ENCODE measurements at regions of chr11 and their contacts with region 1.

Region 1: GRCh38 chr11:6377902-6378639 is 12.2 kb upstream of the SMPD1 start:
- DNase-seq: no peak
- ATAC-seq: peak; percentile 51
- H3K4me3 ChIP-seq: no peak overlapping the region
- H3K27ac ChIP-seq: no peak overlapping the region
- H3K4me1 ChIP-seq: peaks cover 6% of the 10 kb centered on the region; the same call in 1 of the 2 replicates
- H3K27me3 ChIP-seq: no peaks in the 10 kb centered on the region
- CTCF ChIP-seq: no peak
- EP300 ChIP-seq: no peak
- POLR2A ChIP-seq: no peak
- RAD21 ChIP-seq: no peak

Region 2: GRCh38 chr11:6389921-6390724 is 12.1 kb after region 1 on chr11 and contains the start of gene SMPD1:
- CTCF ChIA-PET with region 1: interaction called, 44 read pairs
- POLR2A ChIA-PET with region 1: interaction called, 5 read pairs
- RAD21 ChIA-PET with region 1: interaction called, 12 read pairs
- SMC1A ChIA-PET with region 1: interaction called, 25 read pairs
- in situ Hi-C with region 1: no loop called
- intact Hi-C with region 1: no loop called
- DNase-seq: peak; percentile 66
- ATAC-seq: peak; percentile 98
- H3K4me3 ChIP-seq: peak within 1 kb of the TSS; percentile 90
- H3K27ac ChIP-seq: peak within 1 kb of the TSS; percentile 64
- H3K4me1 ChIP-seq: peaks cover 6% of the 10 kb centered on the region
- H3K27me3 ChIP-seq: no peaks in the 10 kb centered on the region
- CTCF ChIP-seq: no peak
- EP300 ChIP-seq: peak; percentile 21 to 41; a peak in 1 of 4 replicates
- POLR2A ChIP-seq: peak; percentile 88
- RAD21 ChIP-seq: no peak
- polyA plus RNA-seq, gene SMPD1: 1.4 to 3.8 TPM

Region 3: DNA sequence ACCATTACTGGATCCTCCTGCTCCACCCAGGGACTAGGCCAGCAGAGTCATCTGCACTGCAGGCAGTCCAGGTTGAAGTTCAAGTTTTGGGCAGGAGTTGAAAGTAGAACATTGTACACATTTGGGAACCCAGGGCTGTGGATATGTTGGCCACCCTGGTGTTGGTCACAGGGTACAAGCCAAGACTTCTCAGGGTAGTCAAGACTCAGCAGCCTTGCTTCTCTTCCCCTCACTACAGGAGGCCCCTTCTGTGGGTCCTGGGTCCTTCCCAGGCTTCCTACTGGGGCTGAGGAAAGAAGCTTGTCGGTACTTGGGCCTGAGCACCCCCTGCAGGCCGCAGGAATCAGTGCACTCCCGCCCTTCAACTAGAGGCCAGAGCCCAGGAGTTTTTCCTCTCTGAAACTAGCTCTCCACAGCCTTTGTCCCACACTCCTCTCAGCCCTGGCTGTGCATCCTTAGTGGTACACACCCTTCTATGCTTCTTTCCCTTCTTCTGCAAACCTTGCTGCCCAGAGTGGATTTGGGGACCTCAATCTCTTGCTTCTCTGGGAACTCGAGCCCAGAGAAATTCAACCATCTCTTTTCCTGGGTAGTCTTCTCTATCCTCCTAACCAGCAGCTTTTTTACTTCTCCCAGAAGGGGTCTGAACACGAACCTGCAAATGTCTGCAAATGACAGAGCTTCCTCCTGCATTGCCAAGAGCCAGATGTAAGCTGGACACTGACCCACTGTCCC is 65.4 kb after region 1 on chr11:
- CTCF ChIA-PET with region 1: interaction called, 560 read pairs
- POLR2A ChIA-PET with region 1: interaction called, 7 read pairs
- RAD21 ChIA-PET with region 1: interaction called, 305 read pairs
- SMC1A ChIA-PET with region 1: interaction called, 293 read pairs
- in situ Hi-C with region 1: loop called (anchors 5 kb)
- intact Hi-C with region 1: loop called (anchors 1 kb)
- DNase-seq: no peak
- ATAC-seq: peak; percentile 91
- H3K4me3 ChIP-seq: no peak overlapping the region
- H3K27ac ChIP-seq: no peak overlapping the region
- H3K4me1 ChIP-seq: no peaks in the 10 kb centered on the region
- H3K27me3 ChIP-seq: no peaks in the 10 kb centered on the region
- CTCF ChIP-seq: peak; percentile 85 to 89 (median 87)
- EP300 ChIP-seq: no peak
- POLR2A ChIP-seq: no peak
- RAD21 ChIP-seq: peak; percentile 91

Region 4: GRCh38 chr11:6497069-6497839 is 119.2 kb after region 1 on chr11 and contains the start of gene DNHD1:
- CTCF ChIA-PET with region 1: interaction called, 20 read pairs
- POLR2A ChIA-PET with region 1: no interaction called
- RAD21 ChIA-PET with region 1: interaction called, 10 read pairs
- SMC1A ChIA-PET with region 1: interaction called, 7 read pairs
- in situ Hi-C with region 1: no loop called
- intact Hi-C with region 1: no loop called
- DNase-seq: no peak
- ATAC-seq: no peak
- H3K4me3 ChIP-seq: no peak within 1 kb of the TSS
- H3K27ac ChIP-seq: no peak within 1 kb of the TSS
- H3K4me1 ChIP-seq: no peaks in the 10 kb centered on the region
- H3K27me3 ChIP-seq: no peaks in the 10 kb centered on the region
- CTCF ChIP-seq: no peak
- EP300 ChIP-seq: no peak
- POLR2A ChIP-seq: no peak
- RAD21 ChIP-seq: no peak
- polyA plus RNA-seq, gene DNHD1: 0.99 to 1.1 TPM

Region 5: GRCh38 chr11:6667733-6668374 is 289.8 kb after region 1 on chr11:
- CTCF ChIA-PET with region 1: interaction called, 14 read pairs
- POLR2A ChIA-PET with region 1: no interaction called
- RAD21 ChIA-PET with region 1: interaction called, 3 read pairs
- SMC1A ChIA-PET with region 1: interaction called, 7 read pairs
- in situ Hi-C with region 1: loop called (anchors 10 kb)
- intact Hi-C with region 1: no loop called
- DNase-seq: peak; percentile 48
- ATAC-seq: peak; percentile 93
- H3K4me3 ChIP-seq: no peak overlapping the region
- H3K27ac ChIP-seq: no peak overlapping the region
- H3K4me1 ChIP-seq: no peaks in the 10 kb centered on the region
- H3K27me3 ChIP-seq: no peaks in the 10 kb centered on the region
- CTCF ChIP-seq: peak; percentile 40 to 54 (median 52); a peak in 5 of 6 replicates
- EP300 ChIP-seq: no peak
- POLR2A ChIP-seq: no peak
- RAD21 ChIP-seq: peak; percentile 41

Region 6: GRCh38 chr11:6757373-6757967 is 379.4 kb after region 1 on chr11:
- CTCF ChIA-PET with region 1: interaction called, 24 read pairs
- POLR2A ChIA-PET with region 1: no interaction called
- RAD21 ChIA-PET with region 1: interaction called, 11 read pairs
- SMC1A ChIA-PET with region 1: interaction called, 4 read pairs
- in situ Hi-C with region 1: no loop called
- intact Hi-C with region 1: loop called (anchors 1 kb)
- DNase-seq: no peak
- ATAC-seq: peak; percentile 95
- H3K4me3 ChIP-seq: no peak overlapping the region
- H3K27ac ChIP-seq: no peak overlapping the region
- H3K4me1 ChIP-seq: no peaks in the 10 kb centered on the region
- H3K27me3 ChIP-seq: no peaks in the 10 kb centered on the region
- CTCF ChIP-seq: peak; percentile 79 to 89 (median 82)
- EP300 ChIP-seq: no peak
- POLR2A ChIP-seq: no peak
- RAD21 ChIP-seq: peak; percentile 95

Measured in GM12878 (cell line).